ENCODE measurements at regions of chr6 and their contacts with region 1.

Region 1: GRCh38 chr6:109009236-109009961 is 85.2 kb downstream of the SESN1 start:
- DNase-seq: peak; percentile 87 to 92
- ATAC-seq: peak; percentile 85 to 86
- H3K4me3 ChIP-seq: peak overlapping the region; percentile 60 to 89 (median 78)
- H3K27ac ChIP-seq: peak overlapping the region; percentile 92 to 98 (median 95)
- H3K4me1 ChIP-seq: peaks cover 52 to 61% of the 10 kb centered on the region in 2 donors
- H3K27me3 ChIP-seq: no peaks in the 10 kb centered on the region
- CTCF ChIP-seq: peak; percentile 18 to 74 (median 53)
- POLR2A ChIP-seq: peak; percentile 82 to 97

Region 2: GRCh38 chr6:108074359-108075144 is 934.8 kb before region 1 on chr6 and contains the start of gene OSTM1:
- in situ Hi-C with region 1: no loop called
- intact Hi-C with region 1: loop called (anchors 10 kb)
- DNase-seq: peak; percentile 73 to 85
- ATAC-seq: peak; percentile 97 to 98
- H3K4me3 ChIP-seq: peak within 1 kb of the TSS; percentile 90 to 99 (median 94)
- H3K27ac ChIP-seq: peak within 1 kb of the TSS; percentile 85 to 91 (median 88)
- H3K4me1 ChIP-seq: peaks cover 8 to 11% of the 10 kb centered on the region in 2 donors
- H3K27me3 ChIP-seq: no peaks in the 10 kb centered on the region
- CTCF ChIP-seq: peak in 2 of 5 experiments; percentile 8 to 22
- POLR2A ChIP-seq: peak; percentile 94 to 97
- total RNA-seq, gene OSTM1: 28.3 to 64.3 (median 40.0) TPM

Region 3: DNA sequence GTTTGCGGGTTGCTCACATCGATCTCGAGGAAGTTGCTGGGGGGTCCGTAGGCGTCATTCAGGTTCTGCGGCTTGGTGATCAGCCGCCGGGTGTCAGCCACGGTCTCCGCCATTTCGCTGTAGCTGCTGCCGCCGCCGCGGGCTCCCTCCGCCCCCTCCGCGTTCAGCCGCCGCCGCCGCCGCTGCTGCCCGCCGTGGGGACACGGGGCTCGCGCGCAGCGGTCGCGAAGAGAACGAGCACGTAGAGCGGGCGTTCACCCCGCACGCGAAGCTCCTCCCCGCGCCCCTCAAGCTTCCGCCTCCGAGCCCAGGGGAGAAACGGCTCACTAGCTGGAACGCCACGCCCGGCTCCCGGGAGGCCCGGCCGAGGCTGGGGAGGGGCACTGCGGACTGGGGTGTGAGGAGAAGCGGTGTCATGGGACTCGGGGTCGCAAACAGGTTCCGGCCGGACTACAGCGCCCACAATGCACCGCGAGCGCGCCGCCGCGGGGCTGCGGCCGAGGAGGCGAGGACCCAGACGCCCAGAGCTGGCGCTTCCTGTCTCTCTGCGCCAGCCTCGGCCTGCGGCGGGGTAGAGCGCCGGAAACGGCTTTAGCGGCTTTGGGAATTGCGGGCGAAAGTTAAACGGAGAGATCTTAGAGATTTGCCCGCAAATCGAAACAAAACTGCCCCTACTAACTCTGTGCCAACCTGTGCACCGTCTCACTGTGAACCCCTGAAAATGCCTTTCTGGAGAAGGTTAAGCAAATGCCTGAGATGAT is 748.4 kb before region 1 on chr6 and contains the start of gene SNX3:
- in situ Hi-C with region 1: no loop called
- intact Hi-C with region 1: no loop called
- DNase-seq: peak; percentile 96 to 97
- ATAC-seq: peak; percentile 93 to 95
- H3K4me3 ChIP-seq: peak within 1 kb of the TSS; percentile 68 to 97 (median 90)
- H3K27ac ChIP-seq: peak within 1 kb of the TSS; percentile 96 to 99 (median 98)
- H3K4me1 ChIP-seq: peaks cover 30 to 31% of the 10 kb centered on the region in 2 donors
- H3K27me3 ChIP-seq: no peaks in the 10 kb centered on the region
- CTCF ChIP-seq: peak in 2 of 5 experiments; percentile 25 to 26
- POLR2A ChIP-seq: peak; percentile 88 to 94
- total RNA-seq, gene SNX3: 150 to 177 (median 168) TPM

Region 4: GRCh38 chr6:109050012-109050411 is 40.6 kb after region 1 on chr6:
- in situ Hi-C with region 1: no loop called
- intact Hi-C with region 1: loop called (anchors 5 kb)
- DNase-seq: no peak
- ATAC-seq: no peak
- H3K4me3 ChIP-seq: no peak overlapping the region
- H3K27ac ChIP-seq: peak overlapping the region in 3 of 4 donors; percentile 38 to 78 (median 74)
- H3K4me1 ChIP-seq: peaks cover 65 to 67% of the 10 kb centered on the region in 2 donors
- H3K27me3 ChIP-seq: no peaks in the 10 kb centered on the region
- CTCF ChIP-seq: no peak
- POLR2A ChIP-seq: no peak

Region 5: GRCh38 chr6:109073344-109074132 is 64.1 kb after region 1 on chr6:
- in situ Hi-C with region 1: loop called in 1 of 4 experiments (anchors 10 kb)
- intact Hi-C with region 1: loop called (anchors 1 kb)
- DNase-seq: peak in 1 of 2 donors; percentile 34
- ATAC-seq: peak; percentile 66 to 84
- H3K4me3 ChIP-seq: peak overlapping the region in 1 of 4 donors; percentile 4
- H3K27ac ChIP-seq: peak overlapping the region; percentile 37 to 98 (median 57)
- H3K4me1 ChIP-seq: peaks cover 82 to 94% of the 10 kb centered on the region in 2 donors
- H3K27me3 ChIP-seq: no peaks in the 10 kb centered on the region
- CTCF ChIP-seq: peak; percentile 61 to 73 (median 67)
- POLR2A ChIP-seq: no peak

Region 6: GRCh38 chr6:109482905-109483735 is 473.7 kb after region 1 on chr6 and contains the start of gene ZBTB24:
- in situ Hi-C with region 1: no loop called
- intact Hi-C with region 1: loop called (anchors 10 kb)
- DNase-seq: peak; percentile 82 to 88
- ATAC-seq: peak; percentile 83 to 87
- H3K4me3 ChIP-seq: peak within 1 kb of the TSS; percentile 66 to 100 (median 94)
- H3K27ac ChIP-seq: peak within 1 kb of the TSS; percentile 84 to 93 (median 88)
- H3K4me1 ChIP-seq: peaks cover 37 to 46% of the 10 kb centered on the region in 2 donors
- H3K27me3 ChIP-seq: no peaks in the 10 kb centered on the region
- CTCF ChIP-seq: no peak
- POLR2A ChIP-seq: peak; percentile 75 to 89
- total RNA-seq, gene ZBTB24: 3.7 to 10.5 (median 6.1) TPM